ENCODE measurements at regions of chr12 and their contacts with region 1.

Region 1: GRCh38 chr12:12327802-12328201 is 22.2 kb downstream of the MANSC1 start:
- DNase-seq: no peak
- H3K4me3 Mint-ChIP-seq: no peak overlapping the region
- H3K27ac Mint-ChIP-seq: no peak overlapping the region
- H3K4me1 Mint-ChIP-seq: peaks cover 5% of the 10 kb centered on the region
- H3K27me3 Mint-ChIP-seq: peaks cover 15% of the 10 kb centered on the region

Region 2: GRCh38 chr12:12081836-12082497 is 245.8 kb before region 1 on chr12:
- CTCF ChIA-PET with region 1: interaction called, 25 read pairs
- POLR2A ChIA-PET with region 1: no interaction called
- DNase-seq: no peak
- H3K4me3 Mint-ChIP-seq: no peak overlapping the region
- H3K27ac Mint-ChIP-seq: no peak overlapping the region
- H3K4me1 Mint-ChIP-seq: peaks cover 3% of the 10 kb centered on the region
- H3K27me3 Mint-ChIP-seq: no peaks in the 10 kb centered on the region

Region 3: GRCh38 chr12:12244341-12244740 is 83.5 kb before region 1 on chr12:
- CTCF ChIA-PET with region 1: no interaction called
- POLR2A ChIA-PET with region 1: no interaction called
- DNase-seq: no peak
- H3K4me3 Mint-ChIP-seq: no peak overlapping the region
- H3K27ac Mint-ChIP-seq: no peak overlapping the region
- H3K4me1 Mint-ChIP-seq: peaks cover 3% of the 10 kb centered on the region
- H3K27me3 Mint-ChIP-seq: peaks cover 13% of the 10 kb centered on the region